Adrenal gland (tissue), 19 donors: ENCODE measurements at regions of chr4 and their contacts with region 1.

Region 1: DNA sequence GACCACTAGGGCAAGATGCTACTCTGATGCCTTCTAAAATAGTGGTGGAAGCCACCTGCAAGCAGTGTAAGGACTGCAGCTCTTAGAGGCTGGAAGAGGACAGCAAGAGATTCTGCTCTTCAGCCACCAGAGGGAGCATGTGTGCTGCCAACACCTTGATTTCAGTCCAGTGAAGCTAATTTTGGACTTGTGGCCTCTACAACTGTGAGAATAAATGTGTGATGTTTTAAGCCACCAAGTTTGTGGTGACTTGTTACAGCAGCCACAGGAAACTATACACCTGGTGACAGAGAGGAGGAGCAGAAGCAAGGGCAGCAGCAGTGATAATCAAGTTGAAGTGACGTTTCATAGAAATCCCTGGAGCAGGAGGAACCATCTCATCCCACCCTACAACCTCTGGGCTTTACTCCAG is 55.9 kb downstream of the FGFBP1 start:
- DNase-seq: peak; percentile 39 to 75 (median 47)
- H3K4me3 ChIP-seq: no peak overlapping the region
- H3K27ac ChIP-seq: no peak overlapping the region
- H3K4me1 ChIP-seq: no peaks in the 10 kb centered on the region
- H3K27me3 ChIP-seq: no peaks in the 10 kb centered on the region
- CTCF ChIP-seq: peak; percentile 78 to 92 (median 85)
- POLR2A ChIP-seq: no peak

Region 2: GRCh38 chr4:15488658-15489470 is 393.8 kb before region 1 on chr4:
- intact Hi-C with region 1: loop called in 1 of 2 experiments (anchors 10 kb)
- DNase-seq: no peak
- H3K4me3 ChIP-seq: no peak overlapping the region
- H3K27ac ChIP-seq: no peak overlapping the region
- H3K4me1 ChIP-seq: no peaks in the 10 kb centered on the region
- H3K27me3 ChIP-seq: no peaks in the 10 kb centered on the region
- CTCF ChIP-seq: no peak
- POLR2A ChIP-seq: no peak

Region 3: DNA sequence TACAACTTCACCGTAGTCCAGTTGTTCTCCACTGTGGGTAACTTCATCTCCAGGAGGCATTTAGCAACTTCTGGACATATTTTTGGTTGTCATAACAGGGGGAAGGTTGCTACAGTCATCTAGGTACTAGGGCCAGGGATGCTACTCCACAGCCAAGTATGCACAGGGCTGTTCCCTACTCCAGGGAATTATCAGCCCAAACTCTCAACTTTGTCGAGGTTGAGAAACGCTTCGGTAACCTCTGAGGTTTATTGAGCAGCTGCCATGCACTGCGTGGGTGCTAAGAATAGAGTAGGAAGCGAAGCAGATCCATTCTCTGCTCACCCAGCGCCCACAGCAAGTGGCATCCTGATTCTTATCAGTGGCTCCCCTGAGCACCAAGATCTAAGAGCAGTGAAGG is 47.6 kb after region 1 on chr4:
- intact Hi-C with region 1: no loop called
- DNase-seq: no peak
- H3K4me3 ChIP-seq: no peak overlapping the region
- H3K27ac ChIP-seq: no peak overlapping the region
- H3K4me1 ChIP-seq: no peaks in the 10 kb centered on the region
- H3K27me3 ChIP-seq: no peaks in the 10 kb centered on the region
- CTCF ChIP-seq: no peak
- POLR2A ChIP-seq: no peak

Region 4: DNA sequence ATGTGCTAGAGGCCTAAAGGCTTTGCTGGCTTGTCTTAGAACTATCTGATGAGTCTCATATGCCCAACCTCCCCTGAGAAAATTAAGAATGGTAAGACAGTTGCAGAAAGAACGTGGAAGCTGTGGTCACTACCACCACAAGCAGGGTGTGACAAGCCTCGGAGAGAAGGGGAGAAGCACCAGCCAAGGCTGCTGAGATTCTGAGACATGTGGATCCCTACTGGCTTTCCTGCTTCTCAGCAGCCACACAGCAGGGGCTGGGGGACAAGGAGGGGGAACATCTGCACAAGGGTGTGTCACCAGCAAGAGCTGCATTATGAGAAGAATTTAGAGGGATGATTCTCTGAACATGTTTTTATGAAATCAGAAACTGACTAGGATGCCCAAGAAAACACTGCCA is 324.2 kb after region 1 on chr4:
- intact Hi-C with region 1: no loop called
- DNase-seq: no peak
- H3K4me3 ChIP-seq: no peak overlapping the region
- H3K27ac ChIP-seq: no peak overlapping the region
- H3K4me1 ChIP-seq: peaks cover 12 to 62% of the 10 kb centered on the region in 2 donors
- H3K27me3 ChIP-seq: no peaks in the 10 kb centered on the region
- CTCF ChIP-seq: no peak
- POLR2A ChIP-seq: no peak